ENCODE measurements at regions of chr19 and their contacts with region 1.

Region 1: GRCh38 chr19:6048808-6049405 is 61.4 kb downstream of the RFX2 start:
- DNase-seq: peak; percentile 83
- H3K4me3 ChIP-seq: no peak overlapping the region
- H3K27ac ChIP-seq: peak overlapping the region in 1 of 4 donors; percentile 35
- H3K4me1 ChIP-seq: peaks cover 0 to 10% (median 10%) of the 10 kb centered on the region in 4 donors
- H3K27me3 ChIP-seq: no peaks in the 10 kb centered on the region
- CTCF ChIP-seq: peak; percentile 86 to 92 (median 88)
- EP300 ChIP-seq: no peak
- POLR2A ChIP-seq: no peak

Region 2: GRCh38 chr19:5827891-5828660 is 220.8 kb before region 1 on chr19:
- in situ Hi-C with region 1: no loop called
- intact Hi-C with region 1: no loop called
- DNase-seq: peak; percentile 95
- H3K4me3 ChIP-seq: peak overlapping the region; percentile 29 to 50 (median 32)
- H3K27ac ChIP-seq: peak overlapping the region; percentile 82 to 96 (median 90)
- H3K4me1 ChIP-seq: peaks cover 9 to 33% (median 28%) of the 10 kb centered on the region in 4 donors
- H3K27me3 ChIP-seq: no peaks in the 10 kb centered on the region
- CTCF ChIP-seq: no peak
- EP300 ChIP-seq: no peak
- POLR2A ChIP-seq: peak; percentile 90

Region 3: GRCh38 chr19:5967994-5968430 is 80.9 kb before region 1 on chr19:
- in situ Hi-C with region 1: no loop called
- intact Hi-C with region 1: no loop called
- DNase-seq: peak; percentile 69
- H3K4me3 ChIP-seq: no peak overlapping the region
- H3K27ac ChIP-seq: peak overlapping the region; percentile 60 to 86 (median 72)
- H3K4me1 ChIP-seq: peaks cover 39 to 55% (median 48%) of the 10 kb centered on the region in 4 donors
- H3K27me3 ChIP-seq: no peaks in the 10 kb centered on the region
- CTCF ChIP-seq: peak; percentile 85 to 91 (median 90)
- EP300 ChIP-seq: no peak
- POLR2A ChIP-seq: no peak

Region 4: GRCh38 chr19:6292006-6292405 is 243.1 kb after region 1 on chr19:
- in situ Hi-C with region 1: no loop called
- intact Hi-C with region 1: loop called (anchors 10 kb)
- DNase-seq: no peak
- H3K4me3 ChIP-seq: no peak overlapping the region
- H3K27ac ChIP-seq: no peak overlapping the region
- H3K4me1 ChIP-seq: no peaks in the 10 kb centered on the region
- H3K27me3 ChIP-seq: no peaks in the 10 kb centered on the region
- CTCF ChIP-seq: no peak
- EP300 ChIP-seq: no peak
- POLR2A ChIP-seq: no peak

Region 5: DNA sequence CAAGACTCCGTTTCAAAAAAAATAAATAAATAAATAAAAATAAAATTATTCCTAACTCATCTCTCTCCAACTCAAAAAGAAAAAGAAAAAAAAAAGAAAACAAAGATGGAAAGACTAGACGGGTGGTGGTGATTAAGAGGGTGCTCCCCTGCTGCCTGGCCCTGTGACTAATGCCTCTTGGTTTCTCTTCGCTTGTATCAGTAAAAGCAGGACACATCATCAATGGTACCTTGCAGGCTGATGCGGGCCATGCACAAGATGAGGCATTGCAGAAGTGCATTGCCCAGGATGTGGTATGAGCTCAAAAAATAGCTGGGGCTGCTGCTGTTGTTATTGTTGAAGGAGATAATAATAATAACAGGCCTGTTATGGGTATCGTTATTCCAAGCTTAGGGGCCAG is 269.9 kb after region 1 on chr19:
- in situ Hi-C with region 1: loop called in 1 of 4 experiments (anchors 25 kb)
- intact Hi-C with region 1: no loop called
- DNase-seq: no peak
- H3K4me3 ChIP-seq: no peak overlapping the region
- H3K27ac ChIP-seq: no peak overlapping the region
- H3K4me1 ChIP-seq: no peaks in the 10 kb centered on the region
- H3K27me3 ChIP-seq: peaks cover 11% of the 10 kb centered on the region
- CTCF ChIP-seq: no peak
- EP300 ChIP-seq: no peak
- POLR2A ChIP-seq: no peak

Measured in transverse colon (tissue), 4 donors.